ENCODE measurements at regions of chr4 and their contacts with region 1.

Region 1: GRCh38 chr4:74543231-74543670 is 98.3 kb downstream of the AREG start:
- DNase-seq: no peak
- ATAC-seq: peak; percentile 28
- H3K4me3 Mint-ChIP-seq: peak overlapping the region; percentile 13
- H3K27ac Mint-ChIP-seq: no peak overlapping the region
- H3K4me1 Mint-ChIP-seq: peaks cover 2% of the 10 kb centered on the region
- H3K27me3 Mint-ChIP-seq: no peaks in the 10 kb centered on the region
- CTCF ChIP-seq: no peak

Region 2: GRCh38 chr4:74311696-74312313 is 231.4 kb before region 1 on chr4:
- CTCF ChIA-PET with region 1: no interaction called
- POLR2A ChIA-PET with region 1: no interaction called
- intact Hi-C with region 1: no loop called
- DNase-seq: no peak
- ATAC-seq: peak; percentile 40
- H3K4me3 Mint-ChIP-seq: no peak overlapping the region
- H3K27ac Mint-ChIP-seq: no peak overlapping the region
- H3K4me1 Mint-ChIP-seq: peaks cover 5% of the 10 kb centered on the region
- H3K27me3 Mint-ChIP-seq: no peaks in the 10 kb centered on the region
- CTCF ChIP-seq: no peak

Region 3: GRCh38 chr4:74555231-74555630 is 12.0 kb after region 1 on chr4:
- CTCF ChIA-PET with region 1: no interaction called
- POLR2A ChIA-PET with region 1: no interaction called
- intact Hi-C with region 1: loop called (anchors 1 kb)
- DNase-seq: no peak
- ATAC-seq: no peak
- H3K4me3 Mint-ChIP-seq: no peak overlapping the region
- H3K27ac Mint-ChIP-seq: no peak overlapping the region
- H3K4me1 Mint-ChIP-seq: no peaks in the 10 kb centered on the region
- H3K27me3 Mint-ChIP-seq: no peaks in the 10 kb centered on the region
- CTCF ChIP-seq: no peak

Measured in activated B cell treated with CpG ODN at 0.5 μM for 24 hours (primary cell).